T-cell (primary cell): ENCODE measurements at regions of chr16 and their contacts with region 1.

Region 1: DNA sequence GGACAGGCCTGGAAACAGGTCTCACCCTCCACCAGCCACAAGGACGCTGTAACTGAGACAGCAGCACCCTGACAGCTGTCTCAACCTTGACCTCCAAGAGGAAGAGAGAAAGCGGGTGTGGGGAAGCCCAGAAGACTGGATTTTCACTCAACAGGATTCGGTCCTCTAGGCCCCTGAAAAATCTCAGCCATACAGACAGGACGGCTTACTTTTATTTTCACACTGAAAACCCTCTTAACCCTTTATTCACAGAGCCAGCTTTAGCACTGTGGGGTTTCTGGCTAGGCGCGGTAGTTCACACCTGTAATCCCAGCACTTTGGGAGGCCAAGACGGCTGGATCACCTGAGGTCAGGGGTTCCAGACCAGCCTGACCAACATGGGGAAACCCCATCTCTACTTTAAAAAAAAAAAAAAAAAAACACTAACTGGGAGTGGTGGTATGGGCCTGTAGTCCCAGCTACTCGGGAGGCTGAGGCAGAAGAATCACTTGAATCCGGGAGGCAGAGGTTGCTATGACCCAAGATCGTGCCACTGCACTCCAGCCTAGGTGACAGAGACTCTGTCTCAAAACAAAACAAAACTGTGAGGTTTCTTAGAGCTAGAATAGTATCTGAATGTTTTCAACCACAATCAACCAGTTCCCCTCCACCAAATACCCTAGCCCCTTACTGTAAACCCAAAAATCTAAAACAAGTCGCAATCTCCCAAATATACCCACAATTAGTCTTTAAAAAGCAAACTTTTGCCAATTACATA is 5.3 kb downstream of the ANKRD11 start:
- DNase-seq: peak in 3 of 35 experiments; percentile 18 to 56 (median 38)
- ATAC-seq: no peak
- H3K4me3 ChIP-seq: peak overlapping the region in 1 of 2 donors; percentile 15
- H3K4me3 Mint-ChIP-seq: peak overlapping the region; percentile 77 to 92 (median 84)
- H3K27ac ChIP-seq: peak overlapping the region; percentile 67
- H3K27ac Mint-ChIP-seq: peak overlapping the region; percentile 90 to 99
- H3K4me1 ChIP-seq: peaks cover 78% of the 10 kb centered on the region in 2 experiments
- H3K4me1 Mint-ChIP-seq: peaks cover 86 to 89% (median 87%) of the 10 kb centered on the region in 3 donors
- H3K27me3 ChIP-seq: no peaks in the 10 kb centered on the region
- H3K27me3 Mint-ChIP-seq: peaks cover 0 to 2% of the 10 kb centered on the region in 2 donors

Region 2: DNA sequence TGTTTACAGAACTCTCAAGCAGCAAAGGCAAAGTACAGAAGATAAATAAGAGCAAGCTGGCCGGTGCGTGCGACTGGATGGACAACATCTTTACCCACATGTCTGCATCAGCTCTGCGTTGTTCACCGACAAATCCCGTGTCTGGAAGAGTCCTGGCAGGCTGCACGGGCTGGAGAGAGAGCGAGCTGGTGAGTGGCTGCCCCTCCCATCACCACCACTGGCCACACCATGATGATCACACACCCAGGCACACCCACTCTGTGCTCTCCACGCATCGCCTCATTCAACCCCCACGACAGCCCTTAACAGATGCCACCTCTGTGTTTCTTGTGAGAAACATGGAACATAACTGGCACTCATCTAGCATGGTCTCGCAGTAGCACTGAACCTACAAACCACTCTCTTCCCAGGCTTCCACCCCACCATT is 53.9 kb before region 1 on chr16:
- CTCF ChIA-PET with region 1: no interaction called
- POLR2A ChIA-PET with region 1: interaction called in 1 of 2 experiments, 10 read pairs
- DNase-seq: no peak
- ATAC-seq: no peak
- H3K4me3 ChIP-seq: no peak overlapping the region
- H3K4me3 Mint-ChIP-seq: no peak overlapping the region
- H3K27ac ChIP-seq: no peak overlapping the region
- H3K27ac Mint-ChIP-seq: no peak overlapping the region
- H3K4me1 ChIP-seq: peaks cover 34 to 66% of the 10 kb centered on the region in 2 experiments
- H3K4me1 Mint-ChIP-seq: peaks cover 25 to 43% (median 41%) of the 10 kb centered on the region in 3 donors
- H3K27me3 ChIP-seq: no peaks in the 10 kb centered on the region
- H3K27me3 Mint-ChIP-seq: no peaks in the 10 kb centered on the region

Region 3: DNA sequence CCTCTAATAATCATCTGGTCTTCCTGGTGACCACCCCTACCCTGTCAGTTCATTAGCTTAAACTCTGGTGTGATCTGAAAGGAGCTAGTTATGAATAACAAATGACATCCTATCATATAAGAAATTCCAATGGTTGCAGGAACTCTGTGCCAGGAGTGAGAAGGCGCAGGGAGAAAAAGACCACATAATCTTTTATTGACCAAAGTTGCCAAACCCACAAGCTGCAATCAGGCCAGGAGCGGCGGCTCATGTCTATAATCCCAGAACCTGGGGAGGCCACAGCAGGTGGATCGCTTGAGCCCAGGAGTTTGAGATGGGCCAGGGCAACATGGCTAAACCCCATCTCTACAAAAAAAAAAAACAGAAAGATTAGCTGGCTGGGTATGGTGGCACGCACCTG is 18.2 kb before region 1 on chr16:
- CTCF ChIA-PET with region 1: interaction called in 1 of 2 experiments, 6 read pairs
- POLR2A ChIA-PET with region 1: interaction called, 4 to 10 read pairs
- DNase-seq: no peak
- ATAC-seq: no peak
- H3K4me3 ChIP-seq: no peak overlapping the region
- H3K4me3 Mint-ChIP-seq: peak overlapping the region in 1 of 3 donors; percentile 44
- H3K27ac ChIP-seq: no peak overlapping the region
- H3K27ac Mint-ChIP-seq: peak overlapping the region in 1 of 2 donors; percentile 19
- H3K4me1 ChIP-seq: peaks cover 9 to 68% of the 10 kb centered on the region in 2 experiments
- H3K4me1 Mint-ChIP-seq: peaks cover 72 to 83% (median 78%) of the 10 kb centered on the region in 3 donors
- H3K27me3 ChIP-seq: no peaks in the 10 kb centered on the region
- H3K27me3 Mint-ChIP-seq: no peaks in the 10 kb centered on the region

Region 4: GRCh38 chr16:89749647-89750046 is 264.5 kb after region 1 on chr16:
- CTCF ChIA-PET with region 1: no interaction called
- POLR2A ChIA-PET with region 1: no interaction called
- DNase-seq: peak in 2 of 35 experiments; percentile 15 to 30
- ATAC-seq: peak in 1 of 4 experiments; percentile 9
- H3K4me3 ChIP-seq: no peak overlapping the region
- H3K4me3 Mint-ChIP-seq: no peak overlapping the region
- H3K27ac ChIP-seq: no peak overlapping the region
- H3K27ac Mint-ChIP-seq: peak overlapping the region in 1 of 2 donors; percentile 55
- H3K4me1 ChIP-seq: peaks cover 0 to 29% of the 10 kb centered on the region in 2 experiments
- H3K4me1 Mint-ChIP-seq: peaks cover 11 to 26% (median 26%) of the 10 kb centered on the region in 3 donors
- H3K27me3 ChIP-seq: no peaks in the 10 kb centered on the region
- H3K27me3 Mint-ChIP-seq: no peaks in the 10 kb centered on the region